ENCODE measurements at regions of chr19 and their contacts with region 1.

Region 1: DNA sequence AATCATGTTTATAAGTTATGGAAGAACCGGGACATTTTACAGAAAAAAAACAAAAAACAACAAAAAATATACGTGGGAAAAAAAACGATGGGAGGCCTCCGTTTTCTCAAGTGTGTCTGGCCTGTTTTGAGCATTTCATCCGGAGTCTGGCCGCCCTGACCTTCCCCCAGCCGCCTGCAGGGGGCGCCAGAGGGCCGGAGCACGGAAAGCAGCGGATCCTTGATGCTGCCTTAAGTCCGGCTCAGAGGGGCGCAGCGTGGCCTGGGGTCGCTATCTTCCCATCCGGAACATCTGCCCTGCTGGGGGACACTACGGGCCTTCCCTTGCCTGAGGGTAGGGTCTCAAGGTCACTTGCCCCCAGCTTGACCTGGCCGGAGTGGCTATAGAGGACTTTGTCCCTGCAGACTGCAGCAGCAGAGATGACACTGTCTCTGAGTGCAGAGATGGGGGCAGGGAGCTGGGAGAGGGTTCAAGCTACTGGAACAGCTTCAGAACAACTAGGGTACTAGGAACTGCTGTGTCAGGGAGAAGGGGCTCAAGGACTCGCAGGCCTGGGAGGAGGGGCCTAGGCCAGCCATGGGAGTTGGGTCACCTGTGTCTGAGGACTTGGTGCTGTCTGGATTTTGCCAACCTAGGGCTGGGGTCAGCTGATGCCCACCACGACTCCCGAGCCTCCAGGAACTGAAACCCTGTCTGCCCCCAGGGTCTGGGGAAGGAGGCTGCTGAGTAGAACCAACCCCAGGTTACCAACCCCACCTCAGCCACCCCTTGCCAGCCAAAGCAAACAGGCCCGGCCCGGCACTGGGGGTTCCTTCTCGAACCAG is 1.8 kb upstream of the APOE start:
- DNase-seq: peak; percentile 85
- ATAC-seq: peak; percentile 83

Region 2: DNA sequence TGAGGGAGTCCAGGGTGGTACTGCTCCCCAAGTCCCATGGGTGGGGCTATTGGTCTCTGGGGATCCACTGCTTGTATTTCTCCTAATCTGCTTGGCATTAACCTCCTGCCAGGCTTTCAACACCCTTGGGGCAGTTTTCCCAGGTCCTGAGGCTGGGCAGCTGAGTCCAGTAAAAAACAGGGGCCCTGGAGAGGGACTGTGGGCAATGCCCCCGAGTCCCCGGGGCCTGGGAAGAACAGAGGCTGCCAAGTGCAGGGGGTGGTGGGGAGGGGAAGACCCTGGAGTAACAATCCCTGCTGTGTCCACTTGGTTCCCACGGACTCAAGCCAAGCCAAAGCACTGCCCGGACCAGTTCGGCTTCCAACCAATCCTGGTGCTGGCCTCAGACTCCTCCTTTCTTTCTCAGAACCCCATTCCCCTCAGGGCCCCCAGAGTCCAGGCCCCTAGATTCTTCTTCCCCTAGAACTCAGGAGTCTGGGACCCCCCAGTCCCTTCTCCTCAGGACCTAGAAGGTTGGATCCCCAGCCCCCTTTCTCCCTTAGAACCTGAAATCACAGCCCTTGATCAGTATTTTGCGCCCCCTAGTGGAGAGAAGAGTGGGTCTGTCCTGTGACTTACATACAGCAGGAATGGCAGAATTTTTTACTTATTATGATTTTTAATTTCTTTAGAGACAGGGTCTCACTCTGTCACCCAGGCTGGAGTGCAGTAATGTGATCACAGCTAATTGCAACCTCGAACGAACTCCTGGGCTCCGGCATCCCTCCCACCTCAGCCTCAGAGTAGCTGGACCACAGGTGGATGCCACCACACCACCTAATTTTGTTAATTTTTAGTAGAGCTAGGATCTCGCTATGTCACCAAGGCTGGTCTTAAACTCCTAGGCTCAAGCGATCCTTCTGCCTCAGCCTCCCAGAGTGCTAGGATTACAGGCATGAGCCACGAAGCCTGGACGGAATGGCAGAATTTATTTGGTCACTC is 47.7 kb after region 1 on chr19:
- intact Hi-C with region 1: loop called (anchors 2 kb)
- DNase-seq: no peak
- ATAC-seq: no peak

Region 3: DNA sequence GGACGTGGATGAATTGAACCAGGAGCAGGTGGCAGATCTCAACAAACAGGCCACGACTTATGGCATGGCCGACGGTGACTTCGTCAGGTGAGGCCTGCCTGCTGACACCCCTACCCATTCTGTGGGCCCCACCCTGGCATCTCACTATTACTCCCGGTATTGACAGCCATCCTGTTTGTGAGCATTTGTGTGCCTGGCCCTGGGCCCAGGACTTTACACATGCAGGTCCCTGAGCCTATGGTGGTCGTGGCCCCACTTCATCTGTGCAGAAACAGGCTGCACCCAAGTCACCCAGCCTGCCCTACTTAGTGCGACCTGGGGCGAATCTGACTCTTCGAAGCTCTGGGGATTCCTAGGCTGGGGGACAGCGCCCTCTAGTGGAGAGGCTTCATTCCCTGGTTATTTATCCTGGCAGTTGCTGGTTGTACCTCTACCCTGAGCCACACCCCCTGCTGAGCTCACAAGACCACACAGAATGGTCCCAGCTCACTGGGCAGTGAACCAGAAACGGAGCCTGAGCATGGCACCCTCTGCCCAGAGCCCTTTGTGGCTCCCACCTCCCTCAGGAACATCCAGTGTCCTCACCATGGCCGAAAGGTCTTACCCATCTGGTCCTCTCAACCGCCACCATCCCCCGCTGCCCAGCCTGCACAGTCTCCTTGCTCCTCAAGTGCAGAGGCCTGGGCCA is 155.6 kb after region 1 on chr19:
- intact Hi-C with region 1: loop called (anchors 10 kb)
- DNase-seq: peak; percentile 65
- ATAC-seq: peak; percentile 62

Region 4: DNA sequence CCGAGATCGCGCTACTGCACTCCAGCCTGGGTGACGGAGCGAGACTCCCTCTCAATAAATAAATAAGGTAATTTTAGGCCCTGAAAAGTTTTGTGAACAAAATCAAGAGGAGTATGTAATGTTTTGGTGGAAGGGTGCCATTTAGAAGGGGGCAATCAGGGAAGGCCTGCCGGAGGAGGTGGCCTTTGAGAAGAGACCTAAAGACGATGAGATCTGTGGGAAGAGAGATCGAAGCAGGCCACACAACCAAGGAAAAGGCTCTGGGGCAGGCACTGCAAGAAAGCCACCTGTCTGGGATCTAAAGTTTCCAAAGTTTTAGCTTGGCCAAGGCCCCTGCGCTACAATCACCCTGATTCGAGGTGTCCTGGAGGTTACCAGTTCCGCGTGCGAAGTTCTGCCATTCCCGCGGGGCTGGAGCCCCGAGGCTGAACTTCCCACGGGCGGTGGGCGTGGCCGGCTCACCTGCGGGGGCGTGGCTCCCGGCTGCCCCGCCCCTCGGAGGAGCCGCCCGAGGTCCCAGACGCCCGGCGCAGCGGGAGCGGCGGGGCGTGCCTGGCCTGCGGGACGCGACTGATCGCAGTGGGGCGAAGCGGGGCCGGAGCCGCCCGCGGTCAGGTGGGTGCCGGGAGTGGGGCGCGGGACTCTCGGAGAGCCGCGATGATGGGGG is 436.6 kb after region 1 on chr19 and contains the start of gene KLC3:
- intact Hi-C with region 1: loop called (anchors 10 kb)
- DNase-seq: no peak
- ATAC-seq: peak; percentile 29
- total RNA-seq, gene KLC3: not detected

Measured in Right ventricle myocardium superior (tissue), 1 donor.